Colonic mucosa (tissue), 4 donors: ENCODE measurements at regions of chr7 and their contacts with region 1.

Region 1: DNA sequence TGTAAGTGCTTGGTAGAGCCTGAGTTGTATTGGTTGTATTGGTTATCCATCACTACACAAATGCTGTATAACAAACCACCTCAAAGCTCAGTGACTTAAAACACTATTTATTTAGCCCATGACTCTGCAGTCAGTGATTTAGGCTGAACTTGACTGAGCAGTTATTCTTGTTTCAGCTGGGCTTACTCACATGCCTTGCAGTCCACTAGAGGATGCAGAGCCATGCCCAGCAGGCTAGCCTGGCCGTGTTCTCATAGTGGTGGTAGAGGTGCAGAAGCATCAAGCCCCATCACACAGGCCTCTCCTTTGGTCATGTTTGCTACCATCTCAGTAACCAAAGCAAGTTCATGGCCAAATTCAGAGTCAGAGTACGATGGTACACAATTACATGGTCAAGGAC is 43.9 kb downstream of the LUC7L2 start:
- DNase-seq: no peak
- H3K4me3 ChIP-seq: no peak overlapping the region
- H3K27ac ChIP-seq: no peak overlapping the region
- H3K4me1 ChIP-seq: no peaks in the 10 kb centered on the region
- H3K27me3 ChIP-seq: no peaks in the 10 kb centered on the region
- CTCF ChIP-seq: no peak

Region 2: DNA sequence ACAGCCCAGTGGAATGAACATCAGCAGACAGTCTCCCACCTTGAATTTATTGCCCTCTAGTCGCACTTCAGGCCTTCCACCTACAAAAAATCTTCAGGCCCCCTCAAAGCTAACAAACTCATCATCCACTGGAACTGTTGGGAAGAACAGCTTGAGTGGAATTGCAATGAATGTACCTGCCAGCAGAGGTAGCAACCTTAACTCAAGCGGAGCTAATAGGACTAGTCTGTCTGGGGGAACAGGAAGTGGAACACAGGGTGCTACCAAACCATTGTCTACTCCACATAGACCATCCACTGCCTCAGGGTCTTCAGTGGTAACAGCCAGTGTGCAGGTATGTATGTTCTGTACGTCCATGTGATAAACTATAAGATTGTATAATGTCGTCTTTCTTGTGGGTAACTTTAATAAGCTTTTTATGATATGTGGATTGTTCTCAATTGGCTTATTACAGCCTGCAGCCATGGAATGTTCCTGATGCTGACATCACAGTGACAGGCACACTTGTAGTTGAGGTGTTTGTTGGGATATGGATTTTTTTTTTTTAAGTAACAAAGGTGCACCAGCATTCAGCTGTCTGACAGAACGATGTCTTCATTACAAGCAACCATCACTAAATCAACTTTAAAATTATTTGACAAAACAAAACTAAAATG is 119.2 kb before region 1 on chr7:
- intact Hi-C with region 1: no loop called
- DNase-seq: peak; percentile 32
- H3K4me3 ChIP-seq: no peak overlapping the region
- H3K27ac ChIP-seq: peak overlapping the region; percentile 39
- H3K4me1 ChIP-seq: no peaks in the 10 kb centered on the region
- H3K27me3 ChIP-seq: no peaks in the 10 kb centered on the region
- CTCF ChIP-seq: no peak

Region 3: DNA sequence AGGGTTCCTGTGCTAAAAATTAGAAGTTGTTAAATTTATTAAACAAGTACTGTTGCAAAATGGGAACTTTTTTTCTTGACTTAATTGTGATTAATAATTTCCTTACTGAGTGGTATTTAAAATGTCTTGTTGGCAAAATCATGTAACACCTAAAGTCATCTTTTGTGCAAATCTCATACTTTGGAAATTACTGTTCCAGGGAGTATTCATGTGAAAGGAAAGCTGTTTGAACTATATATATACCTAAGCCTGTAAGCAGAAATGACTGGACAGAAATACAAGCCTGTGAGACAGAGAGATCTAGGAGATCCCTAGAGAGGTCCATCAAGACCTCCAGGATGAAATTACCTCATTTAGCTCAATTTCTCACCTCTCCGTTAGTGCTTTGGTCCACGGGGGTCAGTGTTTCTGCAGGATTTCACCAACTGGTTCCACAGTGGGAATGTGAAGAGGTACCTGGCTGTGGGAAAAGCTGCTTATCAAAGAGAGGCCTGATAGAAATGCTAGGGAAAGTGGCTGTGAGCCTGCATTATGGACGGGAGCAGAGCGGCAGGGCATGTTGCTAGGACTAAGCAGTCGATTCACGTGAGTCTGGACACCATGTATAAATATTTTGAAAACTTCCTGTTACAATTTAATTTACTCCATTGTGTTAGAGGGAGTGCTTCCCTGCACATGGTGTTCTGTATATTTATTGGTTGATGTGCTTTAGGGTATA is 36.0 kb before region 1 on chr7:
- intact Hi-C with region 1: loop called (anchors 5 kb)
- DNase-seq: no peak
- H3K4me3 ChIP-seq: no peak overlapping the region
- H3K27ac ChIP-seq: no peak overlapping the region
- H3K4me1 ChIP-seq: no peaks in the 10 kb centered on the region
- H3K27me3 ChIP-seq: no peaks in the 10 kb centered on the region
- CTCF ChIP-seq: no peak